CD8-positive, alpha-beta memory T cell (primary cell): ENCODE measurements at regions of chr20 and their contacts with region 1.

Region 1: GRCh38 chr20:18507218-18508021 is at the start of gene SEC23B:
- DNase-seq: peak; percentile 94 to 100 (median 98)
- H3K4me3 ChIP-seq: peak within 1 kb of the TSS; percentile 68
- H3K4me3 Mint-ChIP-seq: peak within 1 kb of the TSS; percentile 96 to 100 (median 99)
- H3K27ac ChIP-seq: peak within 1 kb of the TSS; percentile 99
- H3K27ac Mint-ChIP-seq: peak within 1 kb of the TSS; percentile 98 to 100 (median 100)
- H3K4me1 ChIP-seq: peaks cover 19% of the 10 kb centered on the region
- H3K4me1 Mint-ChIP-seq: peaks cover 31 to 56% (median 55%) of the 10 kb centered on the region in 3 donors
- H3K27me3 ChIP-seq: no peaks in the 10 kb centered on the region
- H3K27me3 Mint-ChIP-seq: peaks cover 1 to 8% of the 10 kb centered on the region in 2 donors
- total RNA-seq, gene SEC23B: 103 to 105 TPM

Region 2: GRCh38 chr20:18287915-18288748 is 219.3 kb before region 1 on chr20 and contains the start of gene ZNF133:
- CTCF ChIA-PET with region 1: interaction called, 4 read pairs
- POLR2A ChIA-PET with region 1: interaction called, 20 read pairs
- DNase-seq: peak; percentile 93 to 99 (median 96)
- H3K4me3 ChIP-seq: peak within 1 kb of the TSS; percentile 98
- H3K4me3 Mint-ChIP-seq: peak within 1 kb of the TSS; percentile 93 to 99 (median 97)
- H3K27ac ChIP-seq: peak within 1 kb of the TSS; percentile 98
- H3K27ac Mint-ChIP-seq: peak within 1 kb of the TSS; percentile 95 to 100 (median 99)
- H3K4me1 ChIP-seq: peaks cover 19% of the 10 kb centered on the region
- H3K4me1 Mint-ChIP-seq: peaks cover 24 to 39% (median 37%) of the 10 kb centered on the region in 3 donors
- H3K27me3 ChIP-seq: peaks cover 4% of the 10 kb centered on the region
- H3K27me3 Mint-ChIP-seq: peaks cover 17 to 31% of the 10 kb centered on the region in 2 donors
- total RNA-seq, gene ZNF133: 6.1 to 6.4 TPM

Region 3: DNA sequence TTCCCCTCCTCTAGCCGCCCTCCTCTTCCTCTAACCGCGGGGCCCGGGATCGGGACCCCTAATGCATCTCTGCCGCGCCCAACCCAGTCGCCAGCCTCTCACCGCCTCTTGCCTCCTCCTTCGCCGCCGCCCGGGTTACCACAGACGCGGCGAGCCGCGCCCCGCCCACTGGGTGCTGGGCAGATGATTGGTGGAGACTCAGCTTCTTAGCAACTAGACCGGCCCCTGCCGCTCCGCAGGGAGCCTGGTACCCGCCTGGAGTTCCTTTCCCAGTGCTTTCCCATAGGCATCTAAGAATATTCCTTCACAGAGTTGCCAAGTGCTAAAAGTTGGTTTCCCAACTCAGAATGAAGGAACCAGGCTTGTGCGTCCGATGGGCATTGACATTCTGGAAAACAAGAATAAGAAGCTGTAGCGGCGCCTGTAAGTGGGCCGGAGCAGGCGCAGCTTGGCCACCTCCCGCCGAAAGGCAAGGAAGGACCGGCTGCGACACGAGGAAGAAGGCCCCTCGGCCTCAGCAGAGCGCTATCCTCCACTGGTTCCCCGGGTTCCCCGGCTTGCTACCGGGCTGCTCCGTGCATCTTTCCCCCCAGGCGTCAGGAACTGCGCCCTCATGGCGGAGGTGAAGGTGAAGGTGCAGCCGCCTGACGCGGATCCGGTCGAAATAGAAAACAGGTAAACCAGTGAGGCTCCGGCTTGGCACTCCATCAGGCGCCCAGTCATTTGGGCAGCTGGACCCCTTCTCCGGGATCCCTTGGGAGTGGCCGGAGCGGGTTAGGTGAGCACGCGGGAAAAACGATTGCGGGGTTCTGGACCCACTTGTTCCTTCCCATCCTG is 40.3 kb before region 1 on chr20 and contains the starts of genes DZANK1 and POLR3F:
- CTCF ChIA-PET with region 1: interaction called, 9 read pairs
- POLR2A ChIA-PET with region 1: interaction called, 53 read pairs
- DNase-seq: peak; percentile 87 to 94 (median 91)
- H3K4me3 ChIP-seq: peak within 1 kb of the TSS; percentile 91
- H3K4me3 Mint-ChIP-seq: peak within 1 kb of the TSS; percentile 87 to 97 (median 96)
- H3K27ac ChIP-seq: peak within 1 kb of the TSS; percentile 79
- H3K27ac Mint-ChIP-seq: peak within 1 kb of the TSS; percentile 95 to 98 (median 98)
- H3K4me1 ChIP-seq: peaks cover 11% of the 10 kb centered on the region
- H3K4me1 Mint-ChIP-seq: peaks cover 28 to 46% (median 38%) of the 10 kb centered on the region in 3 donors
- H3K27me3 ChIP-seq: no peaks in the 10 kb centered on the region
- H3K27me3 Mint-ChIP-seq: peaks cover 0 to 3% of the 10 kb centered on the region in 2 donors
- total RNA-seq, gene DZANK1: 2.8 to 3.1 TPM
- total RNA-seq, gene POLR3F: 17.3 to 18.0 TPM

Region 4: DNA sequence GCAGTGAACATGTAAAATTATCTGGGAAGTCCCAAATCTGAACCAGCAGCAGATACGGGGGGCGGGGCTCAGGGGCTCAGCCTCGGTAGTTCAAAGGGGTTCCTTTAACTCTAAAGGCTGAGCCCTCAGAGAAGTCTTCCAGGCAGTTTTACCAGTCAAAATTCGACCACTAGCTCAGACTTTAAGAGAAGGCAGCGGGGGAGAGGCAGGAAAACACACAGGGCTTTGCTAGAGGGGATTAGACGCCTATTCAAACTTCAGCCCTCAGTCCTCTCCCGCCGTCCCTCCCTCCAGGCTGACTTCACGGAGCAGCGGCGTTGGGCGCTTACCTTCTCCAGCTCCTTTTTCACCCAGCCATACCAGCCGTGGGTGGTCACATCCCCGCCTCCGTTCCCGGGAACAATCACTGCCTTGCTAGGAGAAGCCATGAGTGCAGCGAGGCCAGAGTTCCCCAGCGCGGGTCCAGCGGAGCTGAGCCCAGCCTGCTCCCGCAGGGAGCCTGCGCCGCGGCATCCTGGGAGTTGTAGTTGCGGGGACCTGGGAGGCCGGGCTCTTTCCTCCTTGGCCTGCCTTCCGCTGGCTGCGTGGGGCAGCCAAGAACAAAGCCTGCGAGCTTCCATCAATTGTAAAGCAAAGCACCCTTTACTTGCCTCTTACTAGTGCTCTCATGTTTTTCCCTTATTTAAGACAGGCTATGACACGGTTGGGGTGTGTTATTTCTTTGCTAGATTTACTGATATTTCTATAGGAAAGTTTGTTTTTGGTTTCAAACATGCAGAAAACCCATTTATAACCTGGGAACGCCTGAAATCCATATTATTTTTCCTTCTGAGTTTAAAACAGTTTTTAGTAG is 10.5 kb before region 1 on chr20 and contains the start of gene RBBP9:
- CTCF ChIA-PET with region 1: interaction called, 30 read pairs
- POLR2A ChIA-PET with region 1: interaction called, 41 read pairs
- DNase-seq: peak; percentile 59 to 75 (median 70)
- H3K4me3 ChIP-seq: peak within 1 kb of the TSS; percentile 82
- H3K4me3 Mint-ChIP-seq: peak within 1 kb of the TSS; percentile 94 to 99 (median 98)
- H3K27ac ChIP-seq: peak within 1 kb of the TSS; percentile 51
- H3K27ac Mint-ChIP-seq: peak within 1 kb of the TSS; percentile 33 to 97 (median 95)
- H3K4me1 ChIP-seq: peaks cover 13% of the 10 kb centered on the region
- H3K4me1 Mint-ChIP-seq: peaks cover 17 to 21% (median 19%) of the 10 kb centered on the region in 3 donors
- H3K27me3 ChIP-seq: no peaks in the 10 kb centered on the region
- H3K27me3 Mint-ChIP-seq: peaks cover 0 to 3% of the 10 kb centered on the region in 2 donors
- total RNA-seq, gene RBBP9: 18.1 to 20.4 TPM

Region 5: DNA sequence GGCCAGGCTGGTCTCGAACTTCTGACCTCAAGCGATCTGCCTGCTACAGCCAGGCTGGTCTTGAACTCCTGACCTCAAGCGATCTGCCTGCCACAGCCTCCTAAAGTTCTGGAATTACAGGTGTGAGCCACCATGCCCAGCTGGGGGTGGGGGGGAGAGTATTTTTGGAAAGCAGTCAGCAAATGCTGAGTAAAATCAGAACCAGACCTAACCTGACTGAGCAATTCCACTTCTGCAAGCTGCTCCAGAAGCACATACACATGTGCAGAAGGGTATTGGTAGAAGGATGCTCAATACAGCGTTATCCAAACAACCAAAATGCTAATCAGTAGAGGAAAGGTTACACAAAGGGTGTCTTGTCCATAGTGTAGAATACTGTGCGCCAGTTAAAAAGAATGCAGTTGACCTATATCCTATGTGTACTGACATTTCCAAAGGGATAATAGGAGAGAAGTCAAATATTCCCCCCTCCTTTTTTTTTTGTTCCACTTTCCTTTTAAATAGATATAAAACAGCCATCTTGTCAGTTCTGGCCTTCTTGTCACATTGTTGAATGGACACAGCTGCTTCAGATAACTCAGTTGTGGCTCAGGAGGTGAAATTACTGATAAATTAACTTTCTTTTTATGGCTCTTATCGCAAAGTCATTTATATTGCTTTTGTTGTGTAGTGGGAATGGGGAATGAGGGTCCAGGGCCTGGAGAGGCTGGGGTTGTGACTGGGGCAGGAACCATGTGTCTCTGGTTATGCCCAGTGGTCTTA is 155.0 kb after region 1 on chr20:
- CTCF ChIA-PET with region 1: no interaction called
- POLR2A ChIA-PET with region 1: no interaction called
- DNase-seq: no peak
- H3K4me3 ChIP-seq: no peak overlapping the region
- H3K4me3 Mint-ChIP-seq: no peak overlapping the region
- H3K27ac ChIP-seq: no peak overlapping the region
- H3K27ac Mint-ChIP-seq: no peak overlapping the region
- H3K4me1 ChIP-seq: no peaks in the 10 kb centered on the region
- H3K4me1 Mint-ChIP-seq: peaks cover 2 to 8% (median 7%) of the 10 kb centered on the region in 3 donors
- H3K27me3 ChIP-seq: no peaks in the 10 kb centered on the region
- H3K27me3 Mint-ChIP-seq: no peaks in the 10 kb centered on the region